ENCODE measurements at regions of chr1 and their contacts with region 1.

Region 1: GRCh38 chr1:216566641-216567205 is 143.5 kb upstream of the USH2A start:
- DNase-seq: peak; percentile 23
- H3K4me3 Mint-ChIP-seq: no peak overlapping the region
- H3K27ac Mint-ChIP-seq: no peak overlapping the region
- H3K4me1 Mint-ChIP-seq: no peaks in the 10 kb centered on the region
- H3K27me3 Mint-ChIP-seq: peaks cover 22% of the 10 kb centered on the region
- CTCF ChIP-seq: no peak

Region 2: DNA sequence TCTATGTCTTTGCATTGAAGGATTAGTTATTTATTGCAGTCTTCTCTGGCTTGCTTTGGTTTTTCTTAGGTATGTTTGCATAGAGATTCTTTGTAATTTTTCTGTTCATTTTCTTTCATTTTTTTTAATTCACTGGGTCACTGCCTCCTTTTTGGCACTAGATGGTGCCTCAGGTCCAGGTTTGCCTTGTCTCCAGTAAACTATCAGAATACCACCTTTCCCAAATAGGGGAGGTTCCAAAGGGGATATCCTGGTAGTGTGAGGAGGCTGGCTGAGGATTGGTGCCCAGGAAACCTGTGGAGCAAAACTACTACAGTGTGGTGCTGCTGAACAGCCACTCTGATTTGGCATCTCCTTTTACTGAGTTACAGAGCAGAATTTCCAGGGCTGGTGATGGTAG is 742.5 kb before region 1 on chr1:
- CTCF ChIA-PET with region 1: no interaction called
- intact Hi-C with region 1: loop called (anchors 1 kb)
- DNase-seq: peak; percentile 21
- H3K4me3 Mint-ChIP-seq: no peak overlapping the region
- H3K27ac Mint-ChIP-seq: no peak overlapping the region
- H3K4me1 Mint-ChIP-seq: no peaks in the 10 kb centered on the region
- H3K27me3 Mint-ChIP-seq: no peaks in the 10 kb centered on the region
- CTCF ChIP-seq: peak; percentile 57

Region 3: GRCh38 chr1:216119602-216120001 is 447.1 kb before region 1 on chr1:
- CTCF ChIA-PET with region 1: no interaction called
- intact Hi-C with region 1: loop called (anchors 5 kb)
- DNase-seq: peak; percentile 12
- H3K4me3 Mint-ChIP-seq: no peak overlapping the region
- H3K27ac Mint-ChIP-seq: no peak overlapping the region
- H3K4me1 Mint-ChIP-seq: no peaks in the 10 kb centered on the region
- H3K27me3 Mint-ChIP-seq: no peaks in the 10 kb centered on the region
- CTCF ChIP-seq: no peak

Region 4: DNA sequence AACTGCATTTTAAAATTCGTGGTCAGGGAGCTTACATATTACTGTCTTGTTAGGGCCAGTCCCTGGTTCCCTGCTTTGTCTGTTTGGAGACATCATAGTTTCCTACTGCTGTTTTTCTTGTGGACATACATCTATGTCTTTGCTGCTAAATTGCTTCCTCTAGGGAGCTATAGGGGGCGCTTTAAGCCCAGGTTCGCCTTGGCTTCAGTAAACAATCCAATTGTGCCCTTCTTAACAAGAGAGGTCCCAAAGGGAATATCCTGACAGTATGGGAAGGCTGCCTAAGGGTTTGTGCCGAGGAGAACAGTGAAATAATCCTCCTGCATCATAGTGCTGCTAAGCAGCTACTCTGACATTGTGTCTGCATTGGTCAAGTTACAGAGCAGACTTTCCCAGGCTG is 255.9 kb before region 1 on chr1:
- CTCF ChIA-PET with region 1: no interaction called
- intact Hi-C with region 1: loop called (anchors 2 kb)
- DNase-seq: peak; percentile 24
- H3K4me3 Mint-ChIP-seq: no peak overlapping the region
- H3K27ac Mint-ChIP-seq: no peak overlapping the region
- H3K4me1 Mint-ChIP-seq: peaks cover 13% of the 10 kb centered on the region
- H3K27me3 Mint-ChIP-seq: no peaks in the 10 kb centered on the region
- CTCF ChIP-seq: peak; percentile 29